Activated T-helper 2 cell treated with anti-CD3 and anti-CD28 coated beads, Interferon-gamma antibody, Interleukin-2, Interleukin-4, amounts not matched to agents 10 μg/mL and 5 μg/mL and 100 μg/mL, durations not matched to agents 14 hours and 24 hours and 36 hours (primary cell): ENCODE measurements at regions of chr2 and their contacts with region 1.

Region 1: GRCh38 chr2:46364797-46365457 is 67.7 kb downstream of the EPAS1 start:
- DNase-seq: no peak
- H3K4me3 Mint-ChIP-seq: no peak overlapping the region
- H3K27ac Mint-ChIP-seq: no peak overlapping the region
- H3K4me1 Mint-ChIP-seq: peaks cover 50% of the 10 kb centered on the region
- H3K27me3 Mint-ChIP-seq: peaks cover 3% of the 10 kb centered on the region

Region 2: GRCh38 chr2:45993476-45993991 is 371.4 kb before region 1 on chr2:
- intact Hi-C with region 1: loop called (anchors 1 kb)
- DNase-seq: peak; percentile 44
- H3K4me3 Mint-ChIP-seq: no peak overlapping the region
- H3K27ac Mint-ChIP-seq: no peak overlapping the region
- H3K4me1 Mint-ChIP-seq: peaks cover 2% of the 10 kb centered on the region
- H3K27me3 Mint-ChIP-seq: peaks cover 6% of the 10 kb centered on the region

Region 3: GRCh38 chr2:46062637-46063412 is 302.1 kb before region 1 on chr2:
- intact Hi-C with region 1: loop called (anchors 1 kb)
- DNase-seq: peak; percentile 55
- H3K4me3 Mint-ChIP-seq: no peak overlapping the region
- H3K27ac Mint-ChIP-seq: no peak overlapping the region
- H3K4me1 Mint-ChIP-seq: peaks cover 28% of the 10 kb centered on the region
- H3K27me3 Mint-ChIP-seq: peaks cover 2% of the 10 kb centered on the region

Region 4: GRCh38 chr2:46239847-46240181 is 125.1 kb before region 1 on chr2:
- intact Hi-C with region 1: loop called (anchors 5 kb)
- DNase-seq: peak; percentile 63
- H3K4me3 Mint-ChIP-seq: peak overlapping the region; percentile 62
- H3K27ac Mint-ChIP-seq: peak overlapping the region; percentile 88
- H3K4me1 Mint-ChIP-seq: peaks cover 51% of the 10 kb centered on the region
- H3K27me3 Mint-ChIP-seq: no peaks in the 10 kb centered on the region

Region 5: DNA sequence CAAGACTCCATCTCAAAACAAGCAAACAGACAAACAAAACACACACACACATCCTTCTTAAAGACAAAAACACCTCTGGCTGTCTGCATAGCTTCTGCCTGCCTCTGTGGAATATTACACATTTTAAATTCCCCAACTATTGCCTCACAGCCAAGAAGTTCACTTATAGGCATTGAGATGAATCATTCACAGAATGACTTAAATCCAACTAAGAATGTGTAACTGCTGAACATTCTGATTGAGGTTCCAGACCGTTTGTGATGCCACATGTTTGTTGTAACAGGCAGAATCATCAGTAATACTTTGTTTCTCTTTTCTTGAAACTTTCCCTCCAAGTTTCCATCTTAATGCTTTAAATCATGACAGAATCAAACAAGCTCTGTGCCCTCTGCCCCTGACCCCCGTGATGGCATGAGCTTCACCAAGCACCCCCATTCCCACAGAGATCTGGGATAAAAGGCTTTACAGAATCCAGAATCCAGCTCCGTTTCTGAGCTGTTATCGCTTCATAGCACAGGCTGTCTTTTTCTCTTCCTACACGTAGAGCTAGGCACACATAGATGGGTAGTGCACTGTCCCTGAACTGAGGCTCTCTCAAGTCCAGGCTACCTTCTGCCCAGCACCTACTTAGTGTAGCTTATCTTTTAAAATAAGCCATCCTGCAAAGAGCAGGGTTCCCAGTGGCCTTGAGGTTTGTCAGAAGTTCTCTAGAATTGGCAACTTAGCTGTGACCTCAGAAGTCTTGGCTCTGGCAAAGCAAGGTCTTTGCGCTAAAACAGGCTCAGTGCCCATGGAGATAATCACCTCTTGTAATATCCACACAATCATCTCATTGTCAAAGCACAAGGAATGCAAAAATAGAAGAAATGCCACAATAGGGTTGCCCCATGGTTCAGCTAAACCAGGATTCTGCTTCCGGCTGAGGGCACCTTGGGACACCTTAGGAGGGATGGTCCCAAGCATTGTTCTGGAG is 34.8 kb before region 1 on chr2:
- intact Hi-C with region 1: loop called (anchors 5 kb)
- DNase-seq: no peak
- H3K4me3 Mint-ChIP-seq: no peak overlapping the region
- H3K27ac Mint-ChIP-seq: peak overlapping the region; percentile 64
- H3K4me1 Mint-ChIP-seq: peaks cover 46% of the 10 kb centered on the region
- H3K27me3 Mint-ChIP-seq: peaks cover 7% of the 10 kb centered on the region

Region 6: DNA sequence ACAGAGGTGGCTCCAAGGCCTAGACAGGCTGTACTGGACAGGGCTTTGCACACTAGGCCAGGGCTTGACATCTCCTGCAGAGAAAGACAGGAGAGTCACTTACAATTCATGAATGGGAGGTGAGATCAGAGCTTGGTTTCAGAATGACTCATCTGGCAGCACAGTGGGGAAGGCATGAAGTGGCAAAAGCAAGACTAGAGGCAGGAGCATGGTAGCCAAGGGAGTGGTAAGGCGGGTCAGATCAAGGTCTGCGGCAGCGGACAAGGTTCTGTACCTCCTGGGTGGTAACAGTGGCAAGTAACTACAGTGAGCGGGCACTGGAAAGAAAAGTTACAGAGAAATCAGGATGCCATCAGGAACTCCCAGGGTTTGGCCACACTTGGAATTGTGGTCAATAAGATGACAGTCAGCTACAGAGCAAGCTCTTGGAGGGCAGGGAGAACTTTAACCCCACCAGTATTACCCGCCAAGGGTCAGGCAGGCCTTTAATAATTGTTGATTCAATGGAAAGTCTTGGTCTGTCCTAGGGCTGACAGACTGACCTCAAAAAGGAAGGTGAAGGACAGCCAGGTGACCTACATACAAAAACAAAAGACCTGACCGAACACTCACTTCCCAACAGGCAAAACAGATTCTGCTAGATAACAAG is 545.0 kb after region 1 on chr2:
- intact Hi-C with region 1: no loop called
- DNase-seq: peak; percentile 35
- H3K4me3 Mint-ChIP-seq: no peak overlapping the region
- H3K27ac Mint-ChIP-seq: peak overlapping the region; percentile 5
- H3K4me1 Mint-ChIP-seq: peaks cover 37% of the 10 kb centered on the region
- H3K27me3 Mint-ChIP-seq: no peaks in the 10 kb centered on the region